Breast epithelium (tissue), 4 donors: ENCODE measurements at regions of chr13 and their contacts with region 1.

Region 1: DNA sequence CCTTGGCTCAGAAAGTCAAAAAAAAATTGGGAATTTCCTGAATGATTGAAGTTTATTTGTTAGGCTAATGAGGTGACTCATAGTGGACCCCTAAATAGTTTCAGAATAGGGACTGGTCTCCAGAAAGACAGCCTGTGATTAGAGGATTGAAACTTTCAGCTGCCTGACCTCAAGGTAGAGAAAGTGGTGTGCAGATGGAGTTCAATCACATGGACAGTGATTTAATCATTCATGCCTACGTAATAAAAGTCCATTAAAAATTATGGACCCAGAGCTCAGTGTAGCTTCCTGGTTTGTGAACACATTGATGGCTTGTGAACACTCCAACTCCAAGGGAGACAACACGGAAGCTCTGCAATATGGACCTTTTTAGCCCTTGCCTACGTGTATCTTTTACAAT is 533.2 kb upstream of the PCDH9 start:
- DNase-seq: no peak
- H3K4me3 ChIP-seq: no peak overlapping the region
- H3K27ac ChIP-seq: no peak overlapping the region
- H3K4me1 ChIP-seq: no peaks in the 10 kb centered on the region
- H3K27me3 ChIP-seq: no peaks in the 10 kb centered on the region
- CTCF ChIP-seq: no peak
- POLR2A ChIP-seq: no peak

Region 2: GRCh38 chr13:68608147-68608546 is 844.8 kb after region 1 on chr13:
- intact Hi-C with region 1: loop called (anchors 5 kb)
- DNase-seq: no peak
- H3K4me3 ChIP-seq: no peak overlapping the region
- H3K27ac ChIP-seq: no peak overlapping the region
- H3K4me1 ChIP-seq: no peaks in the 10 kb centered on the region
- H3K27me3 ChIP-seq: no peaks in the 10 kb centered on the region
- CTCF ChIP-seq: no peak
- POLR2A ChIP-seq: no peak